Colonic mucosa (tissue), 4 donors: ENCODE measurements at regions of chr13 and their contacts with region 1.

Region 1: DNA sequence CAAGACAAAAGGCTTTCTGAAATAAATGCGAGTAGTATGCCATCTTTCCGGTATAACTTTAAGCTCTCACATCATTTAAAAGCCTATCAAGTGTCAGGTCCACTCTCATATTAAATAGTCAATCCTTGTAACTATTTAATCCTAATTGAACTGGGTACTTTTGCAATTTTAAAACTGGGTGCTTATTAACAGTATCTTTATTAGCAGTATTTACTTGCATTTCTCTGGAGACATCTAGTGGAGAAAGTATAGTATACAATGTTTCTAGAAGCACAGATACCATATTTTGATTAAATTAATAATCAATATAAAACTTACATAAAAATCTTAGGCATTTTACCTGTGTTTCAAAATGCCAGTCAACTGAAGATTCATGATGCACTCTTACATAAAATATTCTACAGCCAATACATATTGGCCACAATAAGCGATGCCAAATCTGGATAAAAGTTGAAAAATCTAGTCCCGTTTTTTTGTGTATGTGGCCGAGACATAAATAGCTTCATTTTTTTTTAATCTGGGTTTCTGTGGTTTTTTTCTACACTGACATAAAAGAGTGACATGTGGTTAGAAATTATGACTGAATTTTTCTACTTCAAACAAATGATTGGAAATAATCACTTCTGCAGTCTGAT is 4.3 kb upstream of the POSTN start:
- DNase-seq: no peak
- H3K4me3 ChIP-seq: no peak overlapping the region
- H3K27ac ChIP-seq: no peak overlapping the region
- H3K4me1 ChIP-seq: no peaks in the 10 kb centered on the region
- H3K27me3 ChIP-seq: no peaks in the 10 kb centered on the region
- CTCF ChIP-seq: peak; percentile 23

Region 2: DNA sequence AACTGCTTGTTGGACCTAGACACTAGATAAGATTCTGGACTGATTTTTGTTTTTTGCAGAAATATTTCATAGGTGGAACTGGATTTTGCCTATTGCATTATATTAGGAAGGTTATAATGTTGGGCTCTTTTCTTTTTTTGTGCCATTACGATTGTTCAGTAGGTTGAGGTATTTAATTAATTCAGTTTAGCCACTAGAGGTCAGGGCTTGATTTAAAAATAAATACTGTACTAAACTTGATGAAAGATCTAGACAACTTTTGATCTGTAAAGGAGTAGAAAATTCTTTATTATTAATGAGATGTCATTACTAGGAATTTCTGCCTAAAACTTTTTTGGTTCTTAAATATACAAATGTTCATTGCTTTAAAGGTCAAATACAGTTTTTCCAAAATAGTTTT is 528.2 kb before region 1 on chr13:
- intact Hi-C with region 1: loop called (anchors 10 kb)
- DNase-seq: no peak
- H3K4me3 ChIP-seq: no peak overlapping the region
- H3K27ac ChIP-seq: no peak overlapping the region
- H3K4me1 ChIP-seq: no peaks in the 10 kb centered on the region
- H3K27me3 ChIP-seq: no peaks in the 10 kb centered on the region
- CTCF ChIP-seq: no peak

Region 3: DNA sequence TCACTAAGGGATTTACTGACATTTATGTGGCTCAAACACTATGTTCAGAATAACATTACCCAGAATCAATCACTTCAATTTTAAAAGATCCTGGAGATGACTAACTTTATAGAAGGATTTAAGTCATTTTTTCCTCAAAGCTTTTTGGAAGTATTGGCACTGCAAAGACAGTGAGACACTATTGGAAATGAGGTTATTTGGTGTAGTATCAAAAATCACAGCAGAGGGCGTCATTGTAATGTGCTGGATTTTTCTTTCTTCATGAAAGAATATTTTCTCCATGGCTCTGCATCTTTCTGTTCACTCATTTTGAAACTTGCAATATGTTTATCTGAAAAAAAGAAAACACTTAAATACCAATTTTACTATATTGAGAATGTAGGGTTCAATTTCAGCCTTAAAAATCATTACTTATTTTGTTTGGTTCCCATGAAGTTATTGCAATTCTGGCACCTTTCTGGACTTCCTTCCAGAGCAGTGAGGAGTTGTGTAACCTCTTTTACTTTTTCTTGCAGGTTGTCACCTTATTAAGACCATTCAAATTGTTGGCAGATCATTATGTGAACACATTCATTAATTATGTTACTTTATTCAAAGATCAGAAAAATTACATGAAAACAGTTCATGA is 493.7 kb before region 1 on chr13:
- intact Hi-C with region 1: loop called (anchors 5 kb)
- DNase-seq: no peak
- H3K4me3 ChIP-seq: no peak overlapping the region
- H3K27ac ChIP-seq: no peak overlapping the region
- H3K4me1 ChIP-seq: no peaks in the 10 kb centered on the region
- H3K27me3 ChIP-seq: no peaks in the 10 kb centered on the region
- CTCF ChIP-seq: peak; percentile 50

Region 4: DNA sequence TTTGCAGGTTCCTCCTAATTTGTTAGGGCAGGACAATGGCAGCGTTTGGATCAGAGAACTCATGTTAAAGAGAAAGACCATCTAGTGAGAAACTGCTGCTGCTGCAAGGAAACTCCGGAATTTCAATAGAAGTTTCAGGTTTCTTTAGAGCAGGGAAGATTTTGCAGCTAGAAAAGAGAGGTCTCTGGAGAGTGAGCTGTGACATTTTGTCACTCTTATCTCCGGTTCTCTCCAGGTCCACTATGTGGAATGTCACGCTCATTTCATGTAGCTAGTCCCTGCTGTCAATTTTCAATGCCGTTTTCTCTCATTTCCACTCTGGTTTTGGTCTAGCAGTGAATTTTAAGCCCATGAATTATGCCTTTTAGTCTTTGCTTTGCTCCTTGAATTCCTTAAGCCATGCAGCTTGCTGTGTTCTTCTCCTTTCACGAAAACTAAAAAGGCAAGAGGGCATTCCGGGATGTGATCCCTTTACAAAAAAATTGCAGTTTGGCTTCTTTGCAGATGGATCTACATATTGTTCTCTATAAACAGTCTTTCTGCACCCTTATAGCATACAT is 42.4 kb after region 1 on chr13:
- intact Hi-C with region 1: no loop called
- DNase-seq: no peak
- H3K4me3 ChIP-seq: no peak overlapping the region
- H3K27ac ChIP-seq: no peak overlapping the region
- H3K4me1 ChIP-seq: no peaks in the 10 kb centered on the region
- H3K27me3 ChIP-seq: no peaks in the 10 kb centered on the region
- CTCF ChIP-seq: no peak

Region 5: GRCh38 chr13:37656247-37656940 is 53.5 kb after region 1 on chr13:
- intact Hi-C with region 1: no loop called
- DNase-seq: no peak
- H3K4me3 ChIP-seq: no peak overlapping the region
- H3K27ac ChIP-seq: no peak overlapping the region
- H3K4me1 ChIP-seq: no peaks in the 10 kb centered on the region
- H3K27me3 ChIP-seq: no peaks in the 10 kb centered on the region
- CTCF ChIP-seq: no peak

Region 6: DNA sequence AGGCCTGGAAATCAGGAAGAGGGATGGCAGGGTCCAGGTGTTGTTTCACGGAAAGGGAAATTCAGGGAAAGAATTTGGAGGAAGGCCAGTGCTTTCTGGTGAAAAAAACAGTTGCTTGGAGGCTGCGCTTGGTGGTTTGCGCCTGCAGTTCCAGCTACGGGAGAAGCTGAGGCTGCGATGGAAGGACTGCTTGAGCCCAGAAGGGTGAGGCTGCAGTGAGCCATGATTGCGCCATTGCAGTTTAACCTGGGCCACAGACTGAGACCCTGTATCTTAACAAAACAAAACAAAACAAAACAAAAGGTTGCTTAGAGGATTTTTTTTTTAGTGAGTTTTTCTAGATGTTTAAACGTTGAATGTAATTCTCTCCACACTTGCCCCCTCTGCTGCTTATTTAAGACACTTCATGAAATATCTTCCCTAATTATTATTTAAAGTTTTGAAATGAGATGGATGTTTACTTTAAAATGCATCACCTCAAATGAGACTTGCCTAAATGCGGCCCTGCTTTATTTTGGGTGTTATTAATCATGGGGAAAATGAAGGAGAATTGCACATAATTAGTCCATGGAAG is 342.1 kb after region 1 on chr13:
- intact Hi-C with region 1: no loop called
- DNase-seq: no peak
- H3K4me3 ChIP-seq: no peak overlapping the region
- H3K27ac ChIP-seq: no peak overlapping the region
- H3K4me1 ChIP-seq: no peaks in the 10 kb centered on the region
- H3K27me3 ChIP-seq: no peaks in the 10 kb centered on the region
- CTCF ChIP-seq: no peak